ENCODE measurements at regions of chr5 and their contacts with region 1.

Region 1: GRCh38 chr5:150479416-150479815 is 28.5 kb upstream of the NDST1 start:
- DNase-seq: no peak
- H3K4me3 ChIP-seq: no peak overlapping the region
- H3K27ac ChIP-seq: no peak overlapping the region
- H3K4me1 ChIP-seq: peaks cover 3 to 4% (median 3%) of the 10 kb centered on the region in 4 donors
- H3K27me3 ChIP-seq: no peaks in the 10 kb centered on the region
- CTCF ChIP-seq: no peak
- EP300 ChIP-seq: no peak
- POLR2A ChIP-seq: no peak

Region 2: GRCh38 chr5:149895416-149896345 is 583.7 kb before region 1 on chr5:
- in situ Hi-C with region 1: no loop called
- intact Hi-C with region 1: loop called (anchors 5 kb)
- DNase-seq: no peak
- H3K4me3 ChIP-seq: no peak overlapping the region
- H3K27ac ChIP-seq: no peak overlapping the region
- H3K4me1 ChIP-seq: peaks cover 0 to 13% (median 3%) of the 10 kb centered on the region in 4 donors
- H3K27me3 ChIP-seq: no peaks in the 10 kb centered on the region
- CTCF ChIP-seq: no peak
- EP300 ChIP-seq: no peak
- POLR2A ChIP-seq: no peak

Region 3: GRCh38 chr5:150101023-150101422 is 378.4 kb before region 1 on chr5:
- in situ Hi-C with region 1: no loop called
- intact Hi-C with region 1: no loop called
- DNase-seq: no peak
- H3K4me3 ChIP-seq: no peak overlapping the region
- H3K27ac ChIP-seq: no peak overlapping the region
- H3K4me1 ChIP-seq: peaks cover 0 to 5% (median 0%) of the 10 kb centered on the region in 4 donors
- H3K27me3 ChIP-seq: no peaks in the 10 kb centered on the region
- CTCF ChIP-seq: no peak
- EP300 ChIP-seq: no peak
- POLR2A ChIP-seq: no peak

Region 4: DNA sequence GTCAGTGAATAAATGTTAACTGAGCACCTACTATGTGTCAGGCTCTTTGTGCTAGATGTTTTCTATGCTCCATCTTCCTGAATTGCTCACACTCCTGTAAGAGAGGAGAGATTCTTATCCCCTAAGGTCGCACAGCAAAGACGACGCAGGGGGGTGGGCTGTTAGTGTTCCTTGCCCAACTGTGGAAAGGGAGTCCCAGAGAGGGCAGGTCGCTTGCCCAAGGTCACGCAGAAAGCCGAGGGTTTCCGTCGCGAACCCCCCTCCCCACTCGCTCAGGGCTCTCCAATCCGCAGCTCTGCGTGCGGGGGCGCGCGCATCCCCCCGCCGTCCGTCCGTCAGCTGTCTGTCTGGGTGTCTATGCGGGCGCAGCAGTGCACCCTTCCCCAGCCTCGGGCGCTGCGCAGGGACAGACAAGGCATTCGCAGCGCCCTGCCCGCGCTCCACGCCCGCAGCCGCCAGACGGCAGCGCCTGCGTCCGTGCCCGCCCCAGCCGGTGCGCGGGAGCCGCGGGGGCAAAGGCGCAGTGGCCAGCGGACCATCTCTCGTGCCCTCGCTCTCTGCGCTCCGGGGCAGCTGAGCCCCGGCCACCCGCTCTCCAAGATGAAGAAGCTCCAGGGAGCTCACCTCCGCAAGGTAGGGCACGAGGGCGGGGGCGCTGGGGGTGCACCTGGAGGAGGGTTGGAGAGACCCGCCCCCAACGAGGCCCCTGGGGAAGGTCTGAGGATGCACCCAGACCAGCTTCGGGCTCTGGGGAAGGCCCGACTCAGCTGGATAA is 289.5 kb before region 1 on chr5 and contains the start of gene SLC6A7:
- in situ Hi-C with region 1: no loop called
- intact Hi-C with region 1: no loop called
- DNase-seq: no peak
- H3K4me3 ChIP-seq: peak within 1 kb of the TSS in 1 of 4 donors; percentile 0
- H3K27ac ChIP-seq: peak within 1 kb of the TSS in 1 of 4 donors; percentile 88
- H3K4me1 ChIP-seq: peaks cover 17 to 46% (median 38%) of the 10 kb centered on the region in 4 donors
- H3K27me3 ChIP-seq: peaks cover 12% of the 10 kb centered on the region
- CTCF ChIP-seq: no peak
- EP300 ChIP-seq: no peak
- POLR2A ChIP-seq: no peak
- total RNA-seq, gene SLC6A7: 19.5 to 67.7 (median 21.3) TPM